CD4-positive, alpha-beta memory T cell (primary cell): ENCODE measurements at regions of chr12 and their contacts with region 1.

Region 1: GRCh38 chr12:67698672-67699581 is 50.4 kb downstream of the DYRK2 start:
- DNase-seq: peak; percentile 43 to 74 (median 51)
- H3K4me3 ChIP-seq: peak overlapping the region; percentile 18 to 53
- H3K4me3 Mint-ChIP-seq: peak overlapping the region; percentile 78 to 88 (median 85)
- H3K27ac ChIP-seq: peak overlapping the region; percentile 5
- H3K27ac Mint-ChIP-seq: peak overlapping the region; percentile 71 to 95 (median 90)
- H3K4me1 ChIP-seq: peaks cover 43% of the 10 kb centered on the region
- H3K4me1 Mint-ChIP-seq: peaks cover 40 to 59% (median 50%) of the 10 kb centered on the region in 4 donors
- H3K27me3 ChIP-seq: no peaks in the 10 kb centered on the region
- H3K27me3 Mint-ChIP-seq: peaks cover 0 to 2% of the 10 kb centered on the region in 2 donors

Region 2: GRCh38 chr12:67661311-67662021 is 37.5 kb before region 1 on chr12:
- CTCF ChIA-PET with region 1: no interaction called
- POLR2A ChIA-PET with region 1: no interaction called
- intact Hi-C with region 1: loop called (anchors 5 kb)
- DNase-seq: no peak
- H3K4me3 ChIP-seq: no peak overlapping the region
- H3K4me3 Mint-ChIP-seq: peak overlapping the region in 5 of 8 donors; percentile 7 to 61 (median 31)
- H3K27ac ChIP-seq: no peak overlapping the region
- H3K27ac Mint-ChIP-seq: peak overlapping the region in 4 of 7 donors; percentile 16 to 64 (median 40)
- H3K4me1 ChIP-seq: peaks cover 94% of the 10 kb centered on the region
- H3K4me1 Mint-ChIP-seq: peaks cover 61 to 90% (median 81%) of the 10 kb centered on the region in 4 donors
- H3K27me3 ChIP-seq: no peaks in the 10 kb centered on the region
- H3K27me3 Mint-ChIP-seq: no peaks in the 10 kb centered on the region

Region 3: GRCh38 chr12:67751381-67751928 is 52.5 kb after region 1 on chr12:
- CTCF ChIA-PET with region 1: no interaction called
- POLR2A ChIA-PET with region 1: interaction called, 3 read pairs
- intact Hi-C with region 1: loop called (anchors 5 kb)
- DNase-seq: no peak
- H3K4me3 ChIP-seq: no peak overlapping the region
- H3K4me3 Mint-ChIP-seq: no peak overlapping the region
- H3K27ac ChIP-seq: no peak overlapping the region
- H3K27ac Mint-ChIP-seq: no peak overlapping the region
- H3K4me1 ChIP-seq: no peaks in the 10 kb centered on the region
- H3K4me1 Mint-ChIP-seq: peaks cover 0 to 4% (median 2%) of the 10 kb centered on the region in 4 donors
- H3K27me3 ChIP-seq: no peaks in the 10 kb centered on the region
- H3K27me3 Mint-ChIP-seq: peaks cover 2% of the 10 kb centered on the region in 2 donors

Region 4: DNA sequence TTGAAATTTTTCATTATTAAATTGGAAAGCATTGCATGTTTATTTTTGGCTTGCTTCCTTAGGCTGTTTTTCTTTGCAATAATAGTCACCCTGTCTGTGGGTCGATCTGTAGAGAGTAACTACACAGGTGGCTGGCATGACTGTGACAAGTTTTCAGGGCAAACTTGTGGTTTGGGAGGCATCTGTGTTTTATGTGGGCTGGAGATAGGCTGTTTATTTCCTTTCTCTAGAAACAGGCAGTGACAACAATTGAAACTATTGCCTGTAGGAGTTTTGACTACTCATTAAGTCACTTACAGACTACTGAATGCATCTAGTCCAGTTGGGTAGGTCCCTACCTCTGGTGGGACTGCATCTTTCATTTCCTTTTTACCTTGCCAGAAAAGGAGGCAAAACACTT is 105.2 kb after region 1 on chr12:
- CTCF ChIA-PET with region 1: no interaction called
- POLR2A ChIA-PET with region 1: no interaction called
- intact Hi-C with region 1: loop called (anchors 10 kb)
- DNase-seq: peak; percentile 52 to 80 (median 61)
- H3K4me3 ChIP-seq: no peak overlapping the region
- H3K4me3 Mint-ChIP-seq: no peak overlapping the region
- H3K27ac ChIP-seq: no peak overlapping the region
- H3K27ac Mint-ChIP-seq: no peak overlapping the region
- H3K4me1 ChIP-seq: peaks cover 31% of the 10 kb centered on the region
- H3K4me1 Mint-ChIP-seq: peaks cover 5 to 14% (median 8%) of the 10 kb centered on the region in 4 donors
- H3K27me3 ChIP-seq: no peaks in the 10 kb centered on the region
- H3K27me3 Mint-ChIP-seq: no peaks in the 10 kb centered on the region